Activated CD8-positive, alpha-beta memory T cell treated with anti-CD3 and anti-CD28 coated beads, Interleukin-2, amount 10 ng/mL, durations not matched to agents 7 days and 5 days (primary cell): ENCODE measurements at regions of chr14 and their contacts with region 1.

Region 1: GRCh38 chr14:78566026-78566858 is 396.1 kb downstream of the NRXN3 start:
- DNase-seq: peak; percentile 72
- ATAC-seq: peak; percentile 66
- H3K4me3 Mint-ChIP-seq: no peak overlapping the region
- H3K27ac Mint-ChIP-seq: no peak overlapping the region
- H3K4me1 Mint-ChIP-seq: no peaks in the 10 kb centered on the region
- H3K27me3 Mint-ChIP-seq: no peaks in the 10 kb centered on the region

Region 2: DNA sequence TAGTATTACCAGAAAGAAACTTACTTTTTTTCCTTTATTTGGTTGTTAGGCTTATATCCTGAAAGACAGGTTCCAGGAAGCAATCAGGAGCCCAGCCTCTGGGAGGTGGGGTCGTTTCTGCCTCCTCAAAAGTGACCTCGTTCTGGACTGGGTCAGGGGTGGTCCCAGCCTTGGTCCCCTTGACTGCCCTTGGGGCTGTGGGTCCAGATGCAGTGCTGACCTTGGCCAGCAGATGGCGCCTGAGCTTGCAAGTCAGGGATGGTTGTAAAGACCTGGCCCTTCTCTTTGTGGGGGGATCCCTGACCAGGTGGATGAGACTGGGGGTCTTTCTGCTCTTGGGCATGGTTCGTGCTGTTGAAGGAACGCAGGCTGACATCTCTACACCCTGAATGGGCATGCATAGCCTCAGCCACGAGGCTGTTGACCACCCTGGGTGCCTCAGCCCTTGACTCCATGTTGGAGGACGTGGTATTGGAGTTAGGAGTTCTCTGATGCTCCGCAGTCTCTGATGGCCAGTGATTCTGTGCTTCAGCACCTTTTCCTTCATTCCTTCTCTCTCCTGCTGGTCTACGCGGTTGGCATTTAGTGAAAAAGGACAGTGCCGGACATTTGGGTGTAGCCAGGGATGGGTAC is 704.0 kb before region 1 on chr14:
- CTCF ChIA-PET with region 1: interaction called, 19 read pairs
- DNase-seq: peak; percentile 83
- ATAC-seq: peak; percentile 69
- H3K4me3 Mint-ChIP-seq: no peak overlapping the region
- H3K27ac Mint-ChIP-seq: no peak overlapping the region
- H3K4me1 Mint-ChIP-seq: no peaks in the 10 kb centered on the region
- H3K27me3 Mint-ChIP-seq: no peaks in the 10 kb centered on the region

Region 3: DNA sequence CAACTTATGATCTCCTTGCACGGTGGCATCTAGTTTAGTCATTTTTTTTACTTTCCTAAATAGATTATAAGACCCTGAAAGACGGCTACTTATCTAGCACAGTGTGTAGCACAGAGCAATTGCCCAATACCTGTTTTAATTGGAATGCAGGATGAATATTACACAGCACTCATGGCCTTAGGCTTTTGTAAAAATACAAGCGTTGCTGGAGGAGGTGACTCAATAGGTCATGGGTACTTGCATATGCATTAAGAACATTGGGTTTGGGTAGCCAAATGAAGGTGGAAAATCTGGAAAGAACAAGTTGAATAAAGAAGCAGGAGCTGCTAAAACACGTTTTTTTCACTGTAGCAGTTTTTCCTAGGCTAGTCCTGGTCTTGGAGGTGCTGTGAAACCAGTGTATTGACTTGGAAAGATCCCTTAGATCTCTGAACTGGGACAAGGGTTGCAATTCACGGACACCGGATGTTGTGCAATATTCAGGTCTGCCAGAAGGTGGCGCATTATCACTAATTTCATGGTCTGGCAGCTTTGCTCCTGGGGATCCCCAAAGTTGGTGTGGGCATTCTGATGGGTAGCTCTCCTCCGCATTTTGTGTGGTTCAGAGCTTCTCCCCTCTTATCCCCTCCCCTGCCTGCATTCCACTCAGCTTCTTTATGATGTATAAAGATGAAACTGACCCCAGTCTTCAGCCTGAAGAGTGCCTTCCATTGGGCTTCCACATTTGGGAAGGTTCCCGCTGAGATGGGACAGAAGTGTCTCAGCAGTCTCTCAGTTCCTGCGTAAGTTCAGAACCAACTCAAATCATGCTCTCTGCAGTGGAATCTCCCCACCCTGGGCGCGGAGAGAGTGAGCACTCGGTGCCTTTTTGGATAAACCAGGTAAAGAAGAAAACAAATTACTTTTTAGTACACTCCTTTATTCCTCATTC is 117.8 kb before region 1 on chr14:
- CTCF ChIA-PET with region 1: interaction called, 13 read pairs
- DNase-seq: peak; percentile 62
- ATAC-seq: no peak
- H3K4me3 Mint-ChIP-seq: no peak overlapping the region
- H3K27ac Mint-ChIP-seq: no peak overlapping the region
- H3K4me1 Mint-ChIP-seq: no peaks in the 10 kb centered on the region
- H3K27me3 Mint-ChIP-seq: no peaks in the 10 kb centered on the region